HepG2 (cell line): ENCODE measurements at regions of chr14 and their contacts with region 1.

Region 1: DNA sequence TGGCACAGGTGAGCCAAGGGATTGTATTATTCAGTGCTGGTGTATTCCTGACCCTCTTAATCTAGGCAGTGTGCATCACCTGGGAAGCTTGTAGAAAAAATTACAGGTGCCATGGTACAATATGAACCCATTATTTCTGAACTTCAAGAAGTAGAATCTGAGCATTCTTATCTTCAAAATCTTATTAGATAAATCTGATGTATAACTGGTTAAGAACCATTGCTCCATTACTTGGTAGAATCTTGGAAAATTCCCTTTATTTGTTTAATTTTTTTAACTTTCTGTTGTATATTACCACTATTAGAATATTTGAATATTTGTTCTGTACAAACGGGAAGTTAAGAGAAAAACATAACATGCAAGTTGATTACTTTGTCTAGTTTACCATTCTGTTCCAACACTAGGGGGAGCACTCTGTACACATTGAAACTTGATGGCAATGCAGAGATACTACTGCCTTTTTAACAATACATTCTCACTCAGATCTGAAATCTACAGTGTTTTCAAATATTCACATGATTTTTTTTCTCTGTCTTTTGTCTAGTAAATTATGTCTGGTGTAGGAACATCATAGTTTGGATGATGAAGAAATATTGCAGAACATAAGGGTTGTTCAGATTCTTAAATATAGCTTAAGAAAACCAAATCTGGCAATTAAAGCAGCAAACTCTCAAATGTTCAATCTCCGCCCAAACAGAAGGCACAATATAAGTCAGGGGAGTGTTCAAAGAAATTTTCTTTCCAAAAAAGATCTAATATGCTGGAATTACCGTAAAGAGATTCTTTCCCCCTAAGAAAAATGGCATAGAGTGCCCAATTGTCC is 196.6 kb downstream of the PCNX1 start:
- DNase-seq: peak; percentile 50
- ATAC-seq: peak; percentile 59; the same call in 2 of the 3 replicates
- H3K4me3 ChIP-seq: no peak overlapping the region
- H3K27ac ChIP-seq: no peak overlapping the region
- H3K4me1 ChIP-seq: no peaks in the 10 kb centered on the region
- H3K27me3 ChIP-seq: no peaks in the 10 kb centered on the region
- CTCF ChIP-seq: peak; percentile 74
- EP300 ChIP-seq: no peak
- POLR2A ChIP-seq: no peak
- RAD21 ChIP-seq: no peak

Region 2: GRCh38 chr14:71011479-71011878 is 92.4 kb before region 1 on chr14:
- CTCF ChIA-PET with region 1: no interaction called
- POLR2A ChIA-PET with region 1: no interaction called
- in situ Hi-C with region 1: no loop called
- intact Hi-C with region 1: no loop called
- DNase-seq: no peak
- ATAC-seq: no peak
- H3K4me3 ChIP-seq: no peak overlapping the region
- H3K27ac ChIP-seq: no peak overlapping the region
- H3K4me1 ChIP-seq: no peaks in the 10 kb centered on the region
- H3K27me3 ChIP-seq: no peaks in the 10 kb centered on the region
- CTCF ChIP-seq: no peak
- EP300 ChIP-seq: no peak
- POLR2A ChIP-seq: no peak
- RAD21 ChIP-seq: no peak

Region 3: GRCh38 chr14:71753126-71753830 is 649.4 kb after region 1 on chr14:
- CTCF ChIA-PET with region 1: interaction called, 16 read pairs
- POLR2A ChIA-PET with region 1: no interaction called
- in situ Hi-C with region 1: no loop called
- intact Hi-C with region 1: loop called (anchors 1 kb)
- DNase-seq: peak; percentile 62
- ATAC-seq: peak; percentile 89
- H3K4me3 ChIP-seq: no peak overlapping the region
- H3K27ac ChIP-seq: no peak overlapping the region
- H3K4me1 ChIP-seq: no peaks in the 10 kb centered on the region; the same call in 1 of the 2 replicates
- H3K27me3 ChIP-seq: peaks cover 0 to 5% of the 10 kb centered on the region in 2 experiments; a peak in 1 of 5 replicates
- CTCF ChIP-seq: peak; percentile 93
- EP300 ChIP-seq: no peak
- POLR2A ChIP-seq: no peak
- RAD21 ChIP-seq: peak; percentile 96